CD8-positive, alpha-beta T cell (primary cell): ENCODE measurements at regions of chr6 and their contacts with region 1.

Region 1: DNA sequence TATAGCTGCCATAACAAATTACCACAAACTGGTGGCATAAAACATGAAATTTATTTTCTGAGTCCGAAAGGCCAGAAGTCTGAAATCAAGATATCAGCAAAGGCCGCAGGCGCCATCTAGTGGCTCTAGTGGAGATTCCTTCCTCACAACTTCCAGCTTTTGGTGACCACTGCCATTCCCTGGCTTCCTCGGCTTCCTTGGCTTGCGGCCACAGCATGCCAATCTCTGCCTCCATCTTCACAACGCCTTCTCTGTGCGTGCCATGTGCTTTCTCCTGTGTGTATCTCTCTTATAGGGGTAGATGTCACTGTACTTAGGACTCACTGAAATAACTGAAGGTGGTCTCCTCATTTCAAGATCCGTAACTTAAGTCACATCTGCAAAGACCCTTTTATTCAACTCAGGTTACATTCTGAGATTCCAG is 5.4 kb upstream of the PLAGL1 start:
- DNase-seq: peak; percentile 16 to 74 (median 63)
- ATAC-seq: no peak
- H3K4me3 ChIP-seq: no peak overlapping the region
- H3K4me3 Mint-ChIP-seq: no peak overlapping the region
- H3K27ac ChIP-seq: no peak overlapping the region
- H3K27ac Mint-ChIP-seq: no peak overlapping the region
- H3K4me1 ChIP-seq: no peaks in the 10 kb centered on the region
- H3K4me1 Mint-ChIP-seq: peaks cover 4% of the 10 kb centered on the region
- H3K27me3 ChIP-seq: no peaks in the 10 kb centered on the region
- H3K27me3 Mint-ChIP-seq: peaks cover 3% of the 10 kb centered on the region
- CTCF ChIP-seq: peak; percentile 90

Region 2: GRCh38 chr6:143510991-143511891 is 502.3 kb before region 1 on chr6 and contains the start of gene FUCA2:
- CTCF ChIA-PET with region 1: interaction called, 14 read pairs
- POLR2A ChIA-PET with region 1: no interaction called
- intact Hi-C with region 1: loop called in 1 of 2 experiments (anchors 1 kb)
- DNase-seq: peak; percentile 28 to 83 (median 64)
- ATAC-seq: peak; percentile 70
- H3K4me3 ChIP-seq: peak within 1 kb of the TSS; percentile 61 to 71
- H3K4me3 Mint-ChIP-seq: peak within 1 kb of the TSS; percentile 90
- H3K27ac ChIP-seq: peak within 1 kb of the TSS; percentile 26 to 70
- H3K27ac Mint-ChIP-seq: peak within 1 kb of the TSS; percentile 82
- H3K4me1 ChIP-seq: peaks cover 10% of the 10 kb centered on the region
- H3K4me1 Mint-ChIP-seq: peaks cover 25% of the 10 kb centered on the region
- H3K27me3 ChIP-seq: no peaks in the 10 kb centered on the region
- H3K27me3 Mint-ChIP-seq: no peaks in the 10 kb centered on the region
- CTCF ChIP-seq: no peak
- total RNA-seq, gene FUCA2: 1.6 to 2.2 TPM

Region 3: GRCh38 chr6:143607974-143608373 is 405.5 kb before region 1 on chr6:
- CTCF ChIA-PET with region 1: no interaction called
- POLR2A ChIA-PET with region 1: no interaction called
- intact Hi-C with region 1: no loop called
- DNase-seq: no peak
- ATAC-seq: no peak
- H3K4me3 ChIP-seq: no peak overlapping the region
- H3K4me3 Mint-ChIP-seq: no peak overlapping the region
- H3K27ac ChIP-seq: no peak overlapping the region
- H3K27ac Mint-ChIP-seq: no peak overlapping the region
- H3K4me1 ChIP-seq: no peaks in the 10 kb centered on the region
- H3K4me1 Mint-ChIP-seq: peaks cover 3% of the 10 kb centered on the region
- H3K27me3 ChIP-seq: no peaks in the 10 kb centered on the region
- H3K27me3 Mint-ChIP-seq: no peaks in the 10 kb centered on the region
- CTCF ChIP-seq: no peak

Region 4: DNA sequence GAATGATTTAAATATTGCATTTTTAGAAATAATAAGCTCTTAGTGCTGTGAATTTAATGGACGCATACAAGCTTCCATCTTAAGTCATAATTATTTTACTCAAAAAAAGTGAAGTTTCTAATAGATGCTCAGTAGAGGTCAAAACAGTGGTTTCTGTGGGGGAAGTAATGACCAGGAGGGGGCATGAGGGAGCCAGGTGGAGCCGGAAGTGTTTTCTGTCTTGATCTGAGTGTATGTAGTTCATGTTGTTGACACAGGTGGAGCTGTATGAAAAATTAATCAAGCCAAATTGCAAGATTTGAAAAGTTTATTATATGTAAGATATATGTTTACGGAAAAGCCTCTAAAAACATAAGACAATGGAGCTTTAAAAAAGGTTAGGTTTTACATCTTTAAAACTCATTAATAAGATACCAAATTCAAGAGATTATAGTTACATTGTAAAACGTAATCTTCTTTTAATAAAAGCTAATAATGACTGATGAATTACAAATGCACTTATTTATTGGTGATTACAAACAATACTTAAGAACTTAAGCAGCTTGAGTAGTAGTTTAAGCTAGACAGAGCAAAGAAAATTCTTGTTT is 73.4 kb before region 1 on chr6:
- CTCF ChIA-PET with region 1: interaction called, 118 read pairs
- POLR2A ChIA-PET with region 1: no interaction called
- intact Hi-C with region 1: loop called (anchors 1 kb)
- DNase-seq: peak; percentile 7 to 76 (median 51)
- ATAC-seq: peak; percentile 94
- H3K4me3 ChIP-seq: no peak overlapping the region
- H3K4me3 Mint-ChIP-seq: no peak overlapping the region
- H3K27ac ChIP-seq: no peak overlapping the region
- H3K27ac Mint-ChIP-seq: no peak overlapping the region
- H3K4me1 ChIP-seq: peaks cover 5% of the 10 kb centered on the region
- H3K4me1 Mint-ChIP-seq: peaks cover 13% of the 10 kb centered on the region
- H3K27me3 ChIP-seq: no peaks in the 10 kb centered on the region
- H3K27me3 Mint-ChIP-seq: no peaks in the 10 kb centered on the region
- CTCF ChIP-seq: peak; percentile 93

Region 5: GRCh38 chr6:144027932-144028587 is 14.6 kb after region 1 on chr6:
- CTCF ChIA-PET with region 1: interaction called, 23 read pairs
- POLR2A ChIA-PET with region 1: no interaction called
- intact Hi-C with region 1: no loop called
- DNase-seq: no peak
- ATAC-seq: no peak
- H3K4me3 ChIP-seq: no peak overlapping the region
- H3K4me3 Mint-ChIP-seq: no peak overlapping the region
- H3K27ac ChIP-seq: no peak overlapping the region
- H3K27ac Mint-ChIP-seq: no peak overlapping the region
- H3K4me1 ChIP-seq: no peaks in the 10 kb centered on the region
- H3K4me1 Mint-ChIP-seq: no peaks in the 10 kb centered on the region
- H3K27me3 ChIP-seq: no peaks in the 10 kb centered on the region
- H3K27me3 Mint-ChIP-seq: peaks cover 2% of the 10 kb centered on the region
- CTCF ChIP-seq: no peak

Region 6: GRCh38 chr6:144063744-144064401 is 50.4 kb after region 1 on chr6:
- CTCF ChIA-PET with region 1: interaction called, 6 read pairs
- POLR2A ChIA-PET with region 1: no interaction called
- intact Hi-C with region 1: loop called in 1 of 2 experiments (anchors 10 kb)
- DNase-seq: peak; percentile 85 to 96 (median 91)
- ATAC-seq: peak; percentile 90
- H3K4me3 ChIP-seq: peak overlapping the region; percentile 93 to 97
- H3K4me3 Mint-ChIP-seq: peak overlapping the region; percentile 91
- H3K27ac ChIP-seq: peak overlapping the region; percentile 86 to 88
- H3K27ac Mint-ChIP-seq: peak overlapping the region; percentile 95
- H3K4me1 ChIP-seq: peaks cover 16% of the 10 kb centered on the region
- H3K4me1 Mint-ChIP-seq: peaks cover 30% of the 10 kb centered on the region
- H3K27me3 ChIP-seq: no peaks in the 10 kb centered on the region
- H3K27me3 Mint-ChIP-seq: no peaks in the 10 kb centered on the region
- CTCF ChIP-seq: no peak

Region 7: GRCh38 chr6:144922120-144922722 is 908.7 kb after region 1 on chr6:
- CTCF ChIA-PET with region 1: no interaction called
- POLR2A ChIA-PET with region 1: no interaction called
- intact Hi-C with region 1: no loop called
- DNase-seq: no peak
- ATAC-seq: no peak
- H3K4me3 ChIP-seq: no peak overlapping the region
- H3K4me3 Mint-ChIP-seq: no peak overlapping the region
- H3K27ac ChIP-seq: no peak overlapping the region
- H3K27ac Mint-ChIP-seq: no peak overlapping the region
- H3K4me1 ChIP-seq: no peaks in the 10 kb centered on the region
- H3K4me1 Mint-ChIP-seq: no peaks in the 10 kb centered on the region
- H3K27me3 ChIP-seq: no peaks in the 10 kb centered on the region
- H3K27me3 Mint-ChIP-seq: no peaks in the 10 kb centered on the region
- CTCF ChIP-seq: no peak